ENCODE measurements at regions of chr17 and their contacts with region 1.

Region 1: GRCh38 chr17:63406689-63407330 is 39.3 kb downstream of the CYB561 start:
- DNase-seq: peak in 4 of 5 donors; percentile 76 to 97 (median 88)
- H3K4me3 ChIP-seq: no peak overlapping the region
- H3K27ac ChIP-seq: no peak overlapping the region
- H3K4me1 ChIP-seq: peaks cover 0 to 2% (median 0%) of the 10 kb centered on the region in 3 donors
- H3K27me3 ChIP-seq: no peaks in the 10 kb centered on the region
- CTCF ChIP-seq: peak; percentile 87

Region 2: GRCh38 chr17:63082273-63082993 is 324.4 kb before region 1 on chr17:
- intact Hi-C with region 1: loop called (anchors 10 kb)
- DNase-seq: peak in 2 of 5 donors; percentile 21 to 60
- H3K4me3 ChIP-seq: no peak overlapping the region
- H3K27ac ChIP-seq: no peak overlapping the region
- H3K4me1 ChIP-seq: no peaks in the 10 kb centered on the region
- H3K27me3 ChIP-seq: no peaks in the 10 kb centered on the region
- CTCF ChIP-seq: no peak